ENCODE measurements at regions of chr10 and their contacts with region 1.

Region 1: DNA sequence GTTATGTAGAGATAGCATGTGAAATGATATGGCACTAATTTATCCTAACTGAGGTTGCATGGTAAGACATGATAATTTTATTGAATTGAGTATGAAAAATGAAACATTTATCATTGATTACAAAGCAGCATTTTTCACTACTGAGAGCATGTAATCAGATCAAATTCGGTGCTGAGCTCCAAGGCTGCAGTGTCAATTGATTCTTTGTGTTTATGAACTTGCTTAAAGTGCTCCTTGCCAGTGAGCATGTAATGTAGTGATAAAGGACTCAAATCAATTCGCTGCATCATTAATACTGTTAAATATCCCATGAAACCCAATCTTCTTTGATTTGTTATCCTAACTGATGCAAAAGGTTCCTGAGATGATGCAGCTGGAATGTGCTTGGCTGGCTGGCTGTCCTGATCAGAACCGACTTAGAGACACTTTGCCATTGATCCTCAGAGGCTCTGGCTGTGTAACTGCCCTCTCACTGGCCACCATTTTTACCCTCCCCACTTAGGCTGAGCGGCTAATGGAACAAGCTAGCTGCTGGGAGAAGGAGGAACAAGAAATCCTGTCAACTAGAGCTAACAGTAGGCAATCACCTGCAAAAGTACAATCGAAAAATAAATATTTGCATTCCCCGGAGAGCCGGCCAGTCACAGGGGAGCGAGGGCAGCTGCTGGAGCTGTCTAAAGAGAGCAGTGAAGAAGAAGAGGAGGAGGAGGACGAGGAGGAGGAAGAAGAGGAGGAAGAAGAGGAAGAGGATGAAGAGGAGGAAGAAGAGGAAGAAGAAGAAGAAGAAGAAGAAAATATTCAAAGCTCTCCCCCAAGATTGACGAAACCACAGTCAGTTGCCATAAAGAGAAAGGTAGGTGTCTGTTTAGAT is 89.8 kb upstream of the SAMD8 start:
- DNase-seq: no peak
- ATAC-seq: no peak
- H3K4me3 ChIP-seq: no peak overlapping the region
- H3K27ac ChIP-seq: peak overlapping the region in 3 of 4 donors; percentile 7 to 46 (median 27)
- H3K4me1 ChIP-seq: peaks cover 4 to 30% of the 10 kb centered on the region in 2 donors
- H3K27me3 ChIP-seq: no peaks in the 10 kb centered on the region
- CTCF ChIP-seq: no peak
- POLR2A ChIP-seq: no peak

Region 2: GRCh38 chr10:74888962-74889663 is 132.5 kb before region 1 on chr10:
- in situ Hi-C with region 1: no loop called
- intact Hi-C with region 1: loop called (anchors 5 kb)
- DNase-seq: peak in 1 of 2 donors; percentile 25
- ATAC-seq: peak; percentile 53 to 68
- H3K4me3 ChIP-seq: no peak overlapping the region
- H3K27ac ChIP-seq: peak overlapping the region; percentile 21 to 72 (median 52)
- H3K4me1 ChIP-seq: peaks cover 41 to 63% of the 10 kb centered on the region in 2 donors
- H3K27me3 ChIP-seq: no peaks in the 10 kb centered on the region
- CTCF ChIP-seq: peak in 2 of 5 experiments; percentile 20 to 21
- POLR2A ChIP-seq: no peak

Region 3: DNA sequence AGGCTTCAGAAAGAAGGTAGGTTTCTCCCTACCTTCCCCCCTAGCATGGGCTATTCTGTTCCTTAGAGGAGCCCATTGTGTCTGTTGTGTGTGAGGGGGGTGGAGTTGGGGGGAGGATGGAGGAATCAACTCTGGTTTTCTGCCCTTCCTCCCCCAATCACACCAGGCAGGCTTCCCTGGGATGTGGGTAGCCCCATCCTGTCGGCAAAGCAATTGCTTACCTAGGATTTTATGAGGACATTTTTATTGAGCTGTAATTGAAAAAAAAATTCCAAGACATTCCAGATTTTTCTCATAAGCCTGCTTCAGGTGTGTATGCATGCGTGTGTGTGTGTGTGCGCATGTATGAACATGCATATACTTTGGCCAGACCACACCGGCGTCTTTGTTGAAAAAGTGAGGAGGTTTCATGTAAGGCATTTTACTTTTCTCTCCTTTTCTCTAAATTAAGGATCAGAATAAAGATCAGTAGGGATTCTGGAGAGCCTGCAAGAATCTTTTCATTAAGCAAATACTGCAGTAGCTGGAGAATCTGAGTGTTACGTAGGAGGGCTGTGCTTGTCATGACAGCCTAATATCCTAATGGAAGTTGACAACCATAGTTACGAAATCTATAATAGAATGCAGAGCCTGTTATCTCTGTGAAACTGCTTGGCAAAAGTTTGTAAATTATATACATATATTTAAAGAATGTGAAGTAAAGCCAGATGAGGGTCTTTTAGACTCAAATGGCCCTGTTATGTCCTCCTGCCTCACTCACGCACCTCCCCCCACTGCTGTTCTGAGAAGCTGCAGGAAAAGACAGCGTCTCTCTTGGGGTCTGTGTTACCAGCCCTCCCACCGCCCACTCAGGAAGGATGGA is 62.6 kb after region 1 on chr10:
- in situ Hi-C with region 1: no loop called
- intact Hi-C with region 1: no loop called
- DNase-seq: no peak
- ATAC-seq: no peak
- H3K4me3 ChIP-seq: no peak overlapping the region
- H3K27ac ChIP-seq: no peak overlapping the region
- H3K4me1 ChIP-seq: peaks cover 11 to 14% of the 10 kb centered on the region in 2 donors
- H3K27me3 ChIP-seq: no peaks in the 10 kb centered on the region
- CTCF ChIP-seq: no peak
- POLR2A ChIP-seq: no peak